Body of pancreas (tissue), 4 donors: ENCODE measurements at regions of chr17 and their contacts with region 1.

Region 1: DNA sequence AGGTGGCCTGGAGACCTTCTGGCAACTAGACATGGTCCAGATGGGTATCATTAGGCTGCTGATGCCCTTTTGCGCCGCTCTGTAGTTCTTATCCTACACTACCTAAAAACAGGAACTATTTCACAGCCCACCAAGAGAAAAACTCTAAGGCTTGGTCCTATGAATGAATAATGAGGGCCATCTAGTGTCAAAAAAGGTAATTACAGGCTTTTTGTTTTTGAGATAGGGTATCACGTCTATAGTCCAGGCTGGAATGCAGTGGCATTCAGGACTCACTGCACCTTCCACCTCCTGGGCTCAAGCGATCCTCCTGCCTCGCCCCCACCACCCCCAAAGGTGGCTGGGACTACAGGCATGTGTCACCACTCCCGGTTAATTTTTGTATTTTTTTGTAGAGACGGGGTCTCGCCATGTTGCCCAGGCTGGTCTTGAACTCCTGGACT is 20.9 kb downstream of the COIL start:
- DNase-seq: no peak
- ATAC-seq: peak; percentile 67
- H3K4me3 ChIP-seq: no peak overlapping the region
- H3K27ac ChIP-seq: no peak overlapping the region
- H3K4me1 ChIP-seq: no peaks in the 10 kb centered on the region
- H3K27me3 ChIP-seq: no peaks in the 10 kb centered on the region
- CTCF ChIP-seq: peak; percentile 39 to 81 (median 66)
- POLR2A ChIP-seq: no peak

Region 2: GRCh38 chr17:56819431-56820145 is 120.3 kb before region 1 on chr17:
- intact Hi-C with region 1: loop called (anchors 5 kb)
- DNase-seq: peak; percentile 85 to 89 (median 87)
- ATAC-seq: peak; percentile 90
- H3K4me3 ChIP-seq: no peak overlapping the region
- H3K27ac ChIP-seq: peak overlapping the region; percentile 1 to 70 (median 17)
- H3K4me1 ChIP-seq: peaks cover 29% of the 10 kb centered on the region
- H3K27me3 ChIP-seq: no peaks in the 10 kb centered on the region
- CTCF ChIP-seq: peak; percentile 69 to 98 (median 94)
- POLR2A ChIP-seq: no peak

Region 3: GRCh38 chr17:56880133-56880532 is 59.8 kb before region 1 on chr17:
- intact Hi-C with region 1: no loop called
- DNase-seq: no peak
- ATAC-seq: no peak
- H3K4me3 ChIP-seq: no peak overlapping the region
- H3K27ac ChIP-seq: no peak overlapping the region
- H3K4me1 ChIP-seq: no peaks in the 10 kb centered on the region
- H3K27me3 ChIP-seq: no peaks in the 10 kb centered on the region
- CTCF ChIP-seq: no peak
- POLR2A ChIP-seq: no peak

Region 4: GRCh38 chr17:57033295-57033694 is 93.4 kb after region 1 on chr17:
- intact Hi-C with region 1: no loop called
- DNase-seq: peak; percentile 37 to 60 (median 49)
- ATAC-seq: peak; percentile 54
- H3K4me3 ChIP-seq: no peak overlapping the region
- H3K27ac ChIP-seq: peak overlapping the region in 3 of 4 donors; percentile 51 to 74 (median 60)
- H3K4me1 ChIP-seq: peaks cover 65% of the 10 kb centered on the region
- H3K27me3 ChIP-seq: no peaks in the 10 kb centered on the region
- CTCF ChIP-seq: no peak
- POLR2A ChIP-seq: peak in 1 of 3 donors; percentile 21

Region 5: DNA sequence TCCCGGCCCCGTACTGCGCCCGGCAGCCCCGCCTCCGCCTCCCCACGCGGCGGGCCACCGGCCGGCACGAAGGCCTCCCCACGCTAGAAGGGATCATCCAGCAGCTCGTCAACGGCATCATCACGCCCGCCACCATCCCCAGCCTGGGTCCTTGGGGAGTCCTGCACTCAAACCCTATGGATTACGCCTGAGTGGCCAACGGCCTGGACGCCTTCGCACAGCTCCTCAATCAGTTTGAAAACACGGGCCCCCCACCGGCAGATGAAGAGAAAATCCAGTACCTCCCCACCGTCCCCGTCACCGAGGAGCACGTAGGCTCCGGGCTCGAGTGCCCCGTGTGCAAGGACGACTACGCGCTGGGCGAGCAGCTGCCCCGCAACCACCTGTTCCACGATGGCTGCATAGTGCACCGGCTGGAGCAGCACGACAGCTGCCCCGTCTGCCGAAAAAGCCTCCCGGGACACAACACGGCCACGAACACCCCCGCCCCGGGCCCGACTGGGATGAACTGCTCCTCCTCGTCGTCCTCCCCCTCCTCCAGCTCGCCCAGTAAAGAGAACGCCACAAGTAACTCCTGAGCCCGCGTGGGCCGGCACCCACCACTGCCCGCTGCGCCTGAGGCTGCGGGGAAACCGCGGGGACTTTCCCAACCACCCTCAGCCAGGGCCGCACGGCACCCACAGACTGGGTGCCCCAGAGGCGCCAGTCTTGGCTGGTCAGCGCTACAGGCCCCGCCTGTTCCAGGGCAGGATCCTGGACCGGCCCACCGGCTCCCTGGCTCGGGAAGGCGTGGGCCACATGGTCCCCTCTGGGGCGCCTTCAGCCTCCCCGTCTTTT is 106.2 kb after region 1 on chr17:
- intact Hi-C with region 1: no loop called
- DNase-seq: peak in 2 of 4 donors; percentile 18 to 27
- ATAC-seq: peak; percentile 62
- H3K4me3 ChIP-seq: no peak overlapping the region
- H3K27ac ChIP-seq: no peak overlapping the region
- H3K4me1 ChIP-seq: peaks cover 11% of the 10 kb centered on the region
- H3K27me3 ChIP-seq: no peaks in the 10 kb centered on the region
- CTCF ChIP-seq: no peak
- POLR2A ChIP-seq: no peak